PC-3 (cell line): ENCODE measurements at regions of chr1 and their contacts with region 1.

Region 1: DNA sequence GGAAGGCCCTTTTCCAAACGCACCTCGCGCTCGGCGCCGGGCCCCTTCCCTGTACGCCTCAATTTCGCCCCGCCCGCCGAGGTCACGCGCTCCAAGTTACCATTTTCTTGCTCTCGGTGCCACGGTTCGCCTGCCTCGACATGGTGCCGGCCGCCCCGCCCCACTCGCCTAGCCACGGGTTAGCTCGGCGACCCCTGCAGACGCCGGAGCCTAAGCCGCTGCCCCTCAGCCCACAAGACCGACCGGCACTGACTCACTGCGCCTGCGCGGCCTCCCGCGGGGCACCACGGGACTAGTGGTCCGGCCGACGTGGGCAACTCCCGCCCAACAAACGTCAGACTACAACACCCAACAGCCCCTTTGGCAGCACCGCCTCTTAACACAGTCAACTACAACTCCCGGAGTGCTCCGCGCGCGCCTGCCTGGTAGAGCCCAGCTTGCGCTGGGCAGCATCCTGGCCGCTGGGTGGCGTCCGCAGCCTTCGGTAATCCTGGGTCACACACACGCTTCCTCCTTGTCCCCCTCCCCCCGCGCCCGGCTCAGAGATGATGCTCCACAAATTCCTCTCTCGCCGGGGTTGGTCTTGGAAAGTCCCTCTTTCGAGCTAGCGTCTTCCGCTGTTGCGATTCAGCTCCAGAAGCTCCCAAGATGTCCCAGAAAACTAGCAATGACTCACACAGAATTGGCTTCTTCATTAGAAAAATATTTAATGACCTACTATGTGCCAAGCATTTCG is at the start of gene TRAPPC3:
- DNase-seq: peak; percentile 99
- ATAC-seq: peak; percentile 86
- H3K4me3 ChIP-seq: peak within 1 kb of the TSS; percentile 94
- H3K27ac ChIP-seq: peak within 1 kb of the TSS; percentile 96
- H3K4me1 ChIP-seq: peaks cover 27% of the 10 kb centered on the region
- H3K27me3 ChIP-seq: no peaks in the 10 kb centered on the region
- CTCF ChIP-seq: peak; percentile 96
- total RNA-seq, gene TRAPPC3: 119 and 236 TPM in 2 replicates

Region 2: GRCh38 chr1:35899941-35900340 is 249.5 kb before region 1 on chr1:
- CTCF ChIA-PET with region 1: no interaction called
- POLR2A ChIA-PET with region 1: no interaction called
- intact Hi-C with region 1: no loop called
- DNase-seq: no peak
- ATAC-seq: no peak
- H3K4me3 ChIP-seq: no peak overlapping the region
- H3K27ac ChIP-seq: no peak overlapping the region
- H3K4me1 ChIP-seq: no peaks in the 10 kb centered on the region
- H3K27me3 ChIP-seq: no peaks in the 10 kb centered on the region
- CTCF ChIP-seq: no peak

Region 3: DNA sequence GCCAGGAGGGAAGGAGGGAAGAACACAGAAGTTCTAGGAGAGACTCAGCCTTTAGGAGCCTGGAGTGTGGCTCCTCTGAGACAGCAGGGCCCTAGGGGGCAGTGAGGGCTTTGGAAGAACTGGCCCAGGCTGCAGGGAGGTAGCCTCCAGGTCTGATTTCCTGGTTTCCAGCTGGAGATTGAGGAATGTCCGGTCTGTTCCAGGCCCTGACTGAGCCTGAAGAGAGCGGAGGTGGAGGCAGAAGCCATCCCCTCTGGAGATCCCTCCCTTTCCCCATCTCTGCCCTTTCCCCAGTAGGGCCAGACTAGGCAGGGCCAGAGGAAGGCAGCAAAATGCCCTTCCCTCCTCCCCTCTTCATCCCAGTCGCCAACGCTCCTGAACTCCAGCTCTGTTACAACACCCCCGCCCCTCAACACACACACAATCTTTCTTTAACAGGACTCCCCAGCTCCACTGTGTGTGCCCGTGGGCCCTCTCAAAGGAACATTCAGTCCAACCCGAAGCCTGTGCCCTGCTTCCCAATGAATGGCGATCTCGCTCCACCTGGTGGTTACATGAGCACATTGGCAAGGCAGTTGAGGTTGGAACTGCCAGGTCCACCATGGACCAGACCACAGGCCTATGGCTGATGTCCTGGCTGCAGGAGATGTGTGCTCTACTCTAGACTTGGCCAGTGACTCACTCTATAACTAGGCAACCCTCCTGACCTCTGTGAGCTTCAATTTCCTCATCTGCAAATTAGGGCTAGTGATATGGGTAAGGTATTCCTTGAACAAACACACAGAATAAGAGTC is 38.6 kb after region 1 on chr1:
- CTCF ChIA-PET with region 1: interaction called, 31 read pairs
- POLR2A ChIA-PET with region 1: interaction called, 3 read pairs
- intact Hi-C with region 1: loop called (anchors 1 kb)
- DNase-seq: peak; percentile 91
- ATAC-seq: peak; percentile 97
- H3K4me3 ChIP-seq: no peak overlapping the region
- H3K27ac ChIP-seq: peak overlapping the region; percentile 36
- H3K4me1 ChIP-seq: peaks cover 7% of the 10 kb centered on the region; the same call in 1 of the 2 replicates
- H3K27me3 ChIP-seq: no peaks in the 10 kb centered on the region
- CTCF ChIP-seq: peak; percentile 94

Region 4: DNA sequence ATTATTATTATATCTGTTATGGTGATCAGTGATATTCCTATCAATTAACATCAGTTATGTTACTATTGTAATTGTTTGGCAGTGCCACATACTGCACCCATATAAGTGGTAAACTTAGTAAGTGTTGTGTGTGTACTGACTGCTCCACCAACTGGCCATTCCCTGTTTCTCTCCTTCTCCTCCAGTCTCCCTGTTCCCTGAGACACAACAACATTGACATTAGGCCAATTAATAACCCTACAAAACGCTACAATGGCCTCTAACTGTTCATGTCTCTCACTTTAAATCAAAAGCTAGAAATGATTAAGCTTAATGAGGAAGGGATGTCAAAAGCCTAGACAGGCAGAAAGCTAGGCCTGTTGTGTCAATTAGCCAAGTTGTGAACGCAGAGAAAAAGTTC is 68.3 kb after region 1 on chr1:
- CTCF ChIA-PET with region 1: no interaction called
- POLR2A ChIA-PET with region 1: no interaction called
- intact Hi-C with region 1: loop called (anchors 1 kb)
- DNase-seq: peak; percentile 46
- ATAC-seq: peak; percentile 98
- H3K4me3 ChIP-seq: no peak overlapping the region
- H3K27ac ChIP-seq: no peak overlapping the region
- H3K4me1 ChIP-seq: no peaks in the 10 kb centered on the region
- H3K27me3 ChIP-seq: no peaks in the 10 kb centered on the region
- CTCF ChIP-seq: peak; percentile 59

Region 5: GRCh38 chr1:36285448-36286101 is 136.2 kb after region 1 on chr1:
- CTCF ChIA-PET with region 1: interaction called, 6 read pairs
- POLR2A ChIA-PET with region 1: no interaction called
- intact Hi-C with region 1: loop called (anchors 1 kb)
- DNase-seq: peak; percentile 89
- ATAC-seq: peak; percentile 89
- H3K4me3 ChIP-seq: no peak overlapping the region
- H3K27ac ChIP-seq: no peak overlapping the region
- H3K4me1 ChIP-seq: no peaks in the 10 kb centered on the region
- H3K27me3 ChIP-seq: no peaks in the 10 kb centered on the region
- CTCF ChIP-seq: peak; percentile 90